Vagina (tissue), 2 donors: ENCODE measurements at regions of chr17 and their contacts with region 1.

Region 1: DNA sequence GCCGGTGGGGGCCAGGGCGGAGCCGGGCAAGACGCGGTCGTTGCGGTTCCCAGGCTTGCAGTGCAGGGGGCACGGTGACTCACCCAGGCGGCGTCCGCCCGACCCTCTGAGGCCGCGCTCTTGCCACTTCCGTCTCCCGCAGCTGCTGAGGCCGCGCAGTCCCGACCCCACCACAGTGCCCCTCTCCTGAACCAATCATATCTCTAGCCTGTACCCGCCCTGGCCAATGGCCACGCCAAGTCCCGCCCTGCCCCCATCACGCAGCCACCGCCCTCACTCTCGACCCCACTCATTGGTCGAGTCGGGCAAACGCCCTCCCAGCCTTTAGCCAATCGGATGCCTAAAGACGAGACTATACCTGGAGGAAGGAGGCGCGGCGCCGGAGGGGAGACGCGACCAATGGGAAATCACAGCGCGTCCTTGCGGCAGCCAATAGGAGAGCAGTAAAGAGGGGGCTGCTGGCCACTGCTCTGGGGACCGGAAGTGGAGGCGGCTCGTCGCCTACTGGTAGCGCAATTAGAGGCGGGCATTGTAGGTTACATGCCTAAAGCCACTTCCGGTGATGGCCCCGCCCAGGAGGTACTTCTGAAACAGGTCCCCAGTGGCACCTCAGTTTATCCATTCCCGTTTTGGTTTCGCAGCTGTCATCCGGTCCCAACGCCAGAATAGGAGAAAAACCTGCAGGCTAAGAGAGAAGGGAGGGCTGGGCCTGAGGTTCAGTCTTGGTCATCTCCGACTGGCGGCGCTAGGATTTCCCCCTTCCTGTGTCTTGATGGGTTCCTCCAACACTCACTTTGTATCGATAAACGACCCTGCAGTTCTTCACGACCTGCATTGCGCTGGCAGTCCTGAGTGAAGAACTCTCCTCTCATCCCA is 3.5 kb upstream of the MTMR4 start:
- DNase-seq: peak; percentile 100
- H3K4me3 ChIP-seq: peak overlapping the region; percentile 61 to 71
- H3K27ac ChIP-seq: peak overlapping the region; percentile 93
- H3K4me1 ChIP-seq: peaks cover 41% of the 10 kb centered on the region
- H3K27me3 ChIP-seq: no peaks in the 10 kb centered on the region
- CTCF ChIP-seq: no peak
- POLR2A ChIP-seq: peak in 1 of 2 donors; percentile 6

Region 2: DNA sequence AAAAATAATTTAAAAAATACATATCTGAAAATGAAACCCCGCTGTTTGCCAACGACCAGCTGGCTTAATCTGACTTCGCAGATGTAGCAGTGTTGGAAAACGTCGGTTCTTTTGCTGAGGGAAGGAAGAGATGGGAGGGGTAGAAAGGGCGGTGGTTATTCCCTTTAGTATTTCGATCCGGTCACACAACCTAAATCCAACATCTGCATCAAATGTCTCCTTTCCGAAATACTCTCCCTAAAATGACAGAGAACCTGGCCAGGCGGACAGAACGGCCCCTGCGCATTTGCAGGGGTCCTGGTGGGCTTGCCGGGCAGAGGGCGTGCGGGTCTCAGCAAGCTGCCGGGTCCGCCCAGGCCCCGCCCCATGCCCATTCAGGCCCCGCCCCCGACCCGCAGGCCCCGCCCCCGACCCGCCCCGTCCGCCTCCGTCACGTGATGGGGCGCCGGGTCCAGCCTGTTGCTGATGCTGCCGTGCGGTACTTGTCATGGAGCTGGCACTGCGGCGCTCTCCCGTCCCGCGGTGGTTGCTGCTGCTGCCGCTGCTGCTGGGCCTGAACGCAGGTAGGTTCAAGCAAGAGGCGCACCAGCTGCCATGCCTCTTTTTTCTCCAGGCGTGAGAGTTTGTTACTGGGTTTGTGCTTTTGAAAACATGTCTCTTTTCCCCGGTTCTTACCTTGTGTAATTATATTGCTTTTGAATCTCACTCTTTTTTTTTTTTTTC is 1540.1 kb before region 1 on chr17 and contains the start of gene SCPEP1:
- intact Hi-C with region 1: loop called (anchors 5 kb)
- DNase-seq: peak in 1 of 2 donors; percentile 95
- H3K4me3 ChIP-seq: peak within 1 kb of the TSS; percentile 45 to 59
- H3K27ac ChIP-seq: peak within 1 kb of the TSS; percentile 68
- H3K4me1 ChIP-seq: peaks cover 23% of the 10 kb centered on the region
- H3K27me3 ChIP-seq: no peaks in the 10 kb centered on the region
- CTCF ChIP-seq: no peak
- POLR2A ChIP-seq: peak in 1 of 2 donors; percentile 46
- total RNA-seq, gene SCPEP1: 69.5 TPM

Region 3: GRCh38 chr17:59010026-59010425 is 492.1 kb after region 1 on chr17:
- intact Hi-C with region 1: loop called (anchors 2 kb)
- DNase-seq: no peak
- H3K4me3 ChIP-seq: no peak overlapping the region
- H3K27ac ChIP-seq: no peak overlapping the region
- H3K4me1 ChIP-seq: no peaks in the 10 kb centered on the region
- H3K27me3 ChIP-seq: no peaks in the 10 kb centered on the region
- CTCF ChIP-seq: no peak
- POLR2A ChIP-seq: no peak